ENCODE measurements at regions of chr1 and their contacts with region 1.

Region 1: DNA sequence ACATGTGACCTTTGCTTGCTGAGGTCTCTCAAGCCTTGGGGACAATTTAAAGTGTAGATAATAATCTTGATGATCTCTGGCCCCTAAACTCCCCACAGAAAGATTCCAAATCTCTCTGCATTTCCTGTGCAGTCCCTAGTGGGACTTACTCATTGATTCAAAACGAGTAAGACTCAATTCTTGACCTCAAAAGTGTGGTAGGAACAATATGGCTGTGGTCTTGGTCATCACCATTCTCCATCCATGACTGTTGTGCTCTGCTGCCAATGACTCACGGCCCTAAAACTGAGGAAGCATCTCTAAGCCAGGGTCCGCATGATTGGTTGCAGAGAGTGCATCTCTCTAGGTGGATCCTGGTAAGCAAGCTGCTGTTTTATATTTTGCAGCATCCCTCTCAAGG is 268.0 kb downstream of the PTGER3 start:
- DNase-seq: no peak
- ATAC-seq: peak; percentile 16
- H3K4me3 Mint-ChIP-seq: no peak overlapping the region
- H3K27ac Mint-ChIP-seq: no peak overlapping the region
- H3K4me1 Mint-ChIP-seq: no peaks in the 10 kb centered on the region
- H3K27me3 Mint-ChIP-seq: no peaks in the 10 kb centered on the region

Region 2: GRCh38 chr1:71400050-71400449 is 620.5 kb after region 1 on chr1:
- CTCF ChIA-PET with region 1: no interaction called
- POLR2A ChIA-PET with region 1: interaction called, 12 read pairs
- intact Hi-C with region 1: no loop called
- DNase-seq: no peak
- ATAC-seq: no peak
- H3K4me3 Mint-ChIP-seq: no peak overlapping the region
- H3K27ac Mint-ChIP-seq: no peak overlapping the region
- H3K4me1 Mint-ChIP-seq: no peaks in the 10 kb centered on the region
- H3K27me3 Mint-ChIP-seq: no peaks in the 10 kb centered on the region

Measured in activated CD4-positive, alpha-beta T cell treated with anti-CD3 and anti-CD28 coated beads for 36 hours (primary cell).